ENCODE measurements at regions of chr1 and their contacts with region 1.

Region 1: DNA sequence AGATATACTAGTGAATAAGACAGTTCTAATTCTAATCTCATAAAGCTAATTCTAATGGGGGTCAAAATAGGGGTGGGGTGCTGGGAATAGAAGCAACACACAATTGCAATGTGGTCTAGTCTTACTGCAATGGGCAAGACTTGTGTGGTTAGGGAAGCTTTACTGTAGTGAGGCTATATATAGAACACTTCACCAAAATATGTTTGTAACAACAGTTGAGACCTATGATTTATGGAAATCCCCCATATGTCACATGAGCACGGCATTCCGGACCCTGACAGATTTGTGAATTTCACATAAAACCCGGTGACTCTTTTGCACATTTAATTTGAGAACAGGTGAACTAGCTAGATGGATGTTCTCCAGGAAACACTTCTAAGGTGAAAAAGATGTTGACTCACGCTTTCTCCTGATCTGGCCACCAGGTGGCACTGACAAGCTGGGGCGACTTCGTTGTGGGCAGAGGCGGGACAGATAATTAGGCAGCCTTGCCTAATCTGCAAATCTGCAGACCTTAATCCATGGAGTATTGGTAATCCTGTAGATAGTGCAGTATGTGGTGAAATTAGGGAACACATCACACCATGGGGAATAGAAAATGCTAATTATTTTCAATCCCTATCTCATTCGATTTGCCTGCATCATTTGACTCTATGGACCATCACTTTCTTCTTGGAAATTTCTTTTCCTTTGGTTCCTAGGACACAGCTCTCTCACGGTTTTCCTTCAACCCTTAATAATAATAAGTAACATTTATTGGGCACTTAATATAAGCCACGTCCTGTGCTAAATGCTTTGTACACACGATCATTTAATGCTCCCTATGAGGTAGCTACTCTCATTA is 37.7 kb downstream of the KIAA0040 start:
- DNase-seq: peak; percentile 66 to 87 (median 74)
- ATAC-seq: peak; percentile 61
- H3K4me3 ChIP-seq: no peak overlapping the region
- H3K4me3 Mint-ChIP-seq: no peak overlapping the region
- H3K27ac ChIP-seq: no peak overlapping the region
- H3K27ac Mint-ChIP-seq: no peak overlapping the region
- H3K4me1 ChIP-seq: peaks cover 12% of the 10 kb centered on the region
- H3K4me1 Mint-ChIP-seq: peaks cover 25% of the 10 kb centered on the region
- H3K27me3 ChIP-seq: peaks cover 8 to 10% of the 10 kb centered on the region in 2 experiments
- H3K27me3 Mint-ChIP-seq: peaks cover 40% of the 10 kb centered on the region
- CTCF ChIP-seq: peak; percentile 86

Region 2: GRCh38 chr1:175192630-175193526 is 38.0 kb after region 1 on chr1 and contains the start of gene KIAA0040:
- CTCF ChIA-PET with region 1: interaction called, 6 read pairs
- POLR2A ChIA-PET with region 1: interaction called, 9 read pairs
- intact Hi-C with region 1: loop called in 1 of 2 experiments (anchors 5 kb)
- DNase-seq: peak in 13 of 14 experiments; percentile 18 to 81 (median 45)
- ATAC-seq: peak; percentile 57
- H3K4me3 ChIP-seq: peak within 1 kb of the TSS; percentile 98
- H3K4me3 Mint-ChIP-seq: peak within 1 kb of the TSS; percentile 97
- H3K27ac ChIP-seq: peak within 1 kb of the TSS; percentile 60 to 76
- H3K27ac Mint-ChIP-seq: peak within 1 kb of the TSS; percentile 97
- H3K4me1 ChIP-seq: peaks cover 54% of the 10 kb centered on the region
- H3K4me1 Mint-ChIP-seq: peaks cover 56% of the 10 kb centered on the region
- H3K27me3 ChIP-seq: no peaks in the 10 kb centered on the region
- H3K27me3 Mint-ChIP-seq: no peaks in the 10 kb centered on the region
- CTCF ChIP-seq: no peak
- total RNA-seq, gene KIAA0040: 13.5 to 14.5 TPM

Region 3: DNA sequence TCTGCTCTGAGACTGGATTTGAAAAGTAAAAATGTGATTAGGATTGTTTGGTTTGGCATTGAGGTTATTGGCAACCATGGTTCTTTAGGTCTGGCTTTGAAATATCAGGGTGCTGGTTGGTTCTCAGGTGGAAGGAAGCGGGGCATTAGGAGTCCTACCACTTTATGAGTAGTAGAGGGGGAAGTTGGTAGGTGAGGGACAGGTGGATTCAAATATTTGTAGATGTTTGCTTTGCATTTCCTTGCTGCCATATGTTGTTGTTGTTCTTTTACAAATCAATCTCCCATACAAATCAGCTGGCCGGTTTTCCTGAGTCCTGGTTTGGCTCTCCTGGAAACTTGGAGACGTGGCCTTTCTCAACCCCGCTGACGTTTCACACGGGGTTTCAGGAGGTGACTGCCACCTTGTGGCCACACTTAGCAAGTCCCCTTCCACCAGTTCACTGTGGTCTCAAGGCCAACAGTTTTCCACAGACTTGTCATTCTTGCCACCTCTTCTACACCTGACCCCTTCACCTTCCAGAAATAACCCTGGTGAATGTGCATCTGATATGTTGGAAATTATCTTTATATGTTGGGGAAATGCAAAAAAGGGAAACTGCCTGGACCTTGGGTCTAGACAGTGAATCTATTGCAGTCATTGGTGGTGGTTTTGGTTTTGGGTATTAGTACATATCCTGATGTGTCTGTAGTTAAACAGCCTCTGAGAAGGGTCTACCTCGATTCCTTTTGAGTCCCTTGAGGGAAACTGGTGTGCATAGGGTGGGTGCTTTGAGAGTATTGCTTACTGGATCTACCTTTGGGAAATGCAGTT is 164.8 kb after region 1 on chr1:
- CTCF ChIA-PET with region 1: interaction called, 69 read pairs
- POLR2A ChIA-PET with region 1: interaction called, 23 read pairs
- intact Hi-C with region 1: loop called (anchors 1 kb)
- DNase-seq: peak; percentile 53 to 86 (median 62)
- ATAC-seq: peak; percentile 80
- H3K4me3 ChIP-seq: no peak overlapping the region
- H3K4me3 Mint-ChIP-seq: no peak overlapping the region
- H3K27ac ChIP-seq: no peak overlapping the region
- H3K27ac Mint-ChIP-seq: no peak overlapping the region
- H3K4me1 ChIP-seq: peaks cover 6% of the 10 kb centered on the region
- H3K4me1 Mint-ChIP-seq: peaks cover 15% of the 10 kb centered on the region
- H3K27me3 ChIP-seq: no peaks in the 10 kb centered on the region
- H3K27me3 Mint-ChIP-seq: peaks cover 3% of the 10 kb centered on the region
- CTCF ChIP-seq: peak; percentile 94

Region 4: DNA sequence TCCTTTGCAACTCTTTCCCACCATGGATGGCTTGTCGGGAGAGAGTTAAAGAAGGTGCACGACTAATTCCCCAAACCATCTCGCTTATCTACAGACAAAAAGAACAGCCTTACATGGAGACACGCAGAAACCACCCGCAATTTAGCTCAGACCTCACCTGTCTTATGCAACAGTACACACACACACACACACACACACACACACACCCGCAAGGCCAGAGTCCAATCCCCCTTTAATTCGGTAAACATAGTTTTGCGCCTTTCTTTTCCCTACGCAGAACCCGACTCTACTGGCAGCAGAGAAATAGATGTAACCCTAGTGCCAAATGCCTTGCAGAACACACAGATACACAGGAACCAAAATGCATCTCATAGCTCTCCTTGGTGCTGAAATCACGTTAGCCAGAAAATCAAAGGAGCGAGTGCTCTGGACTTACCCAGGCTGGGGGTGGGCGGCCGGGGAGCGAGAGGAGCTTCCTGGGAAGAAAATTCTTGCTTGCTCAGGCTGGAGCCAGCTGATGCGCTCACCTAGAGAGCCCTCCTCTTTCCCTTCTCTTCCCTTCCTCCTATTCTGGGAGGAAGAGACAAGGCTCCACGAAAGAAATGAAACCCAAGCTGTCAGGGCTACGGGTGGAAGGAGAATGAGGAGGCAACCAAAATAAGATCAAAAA is 588.1 kb after region 1 on chr1:
- CTCF ChIA-PET with region 1: no interaction called
- POLR2A ChIA-PET with region 1: no interaction called
- intact Hi-C with region 1: loop called (anchors 5 to 10 kb)
- DNase-seq: no peak
- ATAC-seq: no peak
- H3K4me3 ChIP-seq: no peak overlapping the region
- H3K4me3 Mint-ChIP-seq: no peak overlapping the region
- H3K27ac ChIP-seq: no peak overlapping the region
- H3K27ac Mint-ChIP-seq: no peak overlapping the region
- H3K4me1 ChIP-seq: no peaks in the 10 kb centered on the region
- H3K4me1 Mint-ChIP-seq: no peaks in the 10 kb centered on the region
- H3K27me3 ChIP-seq: peaks cover 2 to 17% of the 10 kb centered on the region in 2 experiments
- H3K27me3 Mint-ChIP-seq: peaks cover 74% of the 10 kb centered on the region
- CTCF ChIP-seq: no peak

Region 5: GRCh38 chr1:176073524-176074157 is 918.8 kb after region 1 on chr1:
- CTCF ChIA-PET with region 1: interaction called, 4 read pairs
- POLR2A ChIA-PET with region 1: no interaction called
- intact Hi-C with region 1: loop called (anchors 1 to 5 kb)
- DNase-seq: peak in 6 of 14 experiments; percentile 4 to 65 (median 48)
- ATAC-seq: no peak
- H3K4me3 ChIP-seq: no peak overlapping the region
- H3K4me3 Mint-ChIP-seq: no peak overlapping the region
- H3K27ac ChIP-seq: no peak overlapping the region
- H3K27ac Mint-ChIP-seq: no peak overlapping the region
- H3K4me1 ChIP-seq: no peaks in the 10 kb centered on the region
- H3K4me1 Mint-ChIP-seq: peaks cover 12% of the 10 kb centered on the region
- H3K27me3 ChIP-seq: no peaks in the 10 kb centered on the region
- H3K27me3 Mint-ChIP-seq: no peaks in the 10 kb centered on the region
- CTCF ChIP-seq: peak; percentile 64